ENCODE measurements at regions of chr19 and their contacts with region 1.

Region 1: DNA sequence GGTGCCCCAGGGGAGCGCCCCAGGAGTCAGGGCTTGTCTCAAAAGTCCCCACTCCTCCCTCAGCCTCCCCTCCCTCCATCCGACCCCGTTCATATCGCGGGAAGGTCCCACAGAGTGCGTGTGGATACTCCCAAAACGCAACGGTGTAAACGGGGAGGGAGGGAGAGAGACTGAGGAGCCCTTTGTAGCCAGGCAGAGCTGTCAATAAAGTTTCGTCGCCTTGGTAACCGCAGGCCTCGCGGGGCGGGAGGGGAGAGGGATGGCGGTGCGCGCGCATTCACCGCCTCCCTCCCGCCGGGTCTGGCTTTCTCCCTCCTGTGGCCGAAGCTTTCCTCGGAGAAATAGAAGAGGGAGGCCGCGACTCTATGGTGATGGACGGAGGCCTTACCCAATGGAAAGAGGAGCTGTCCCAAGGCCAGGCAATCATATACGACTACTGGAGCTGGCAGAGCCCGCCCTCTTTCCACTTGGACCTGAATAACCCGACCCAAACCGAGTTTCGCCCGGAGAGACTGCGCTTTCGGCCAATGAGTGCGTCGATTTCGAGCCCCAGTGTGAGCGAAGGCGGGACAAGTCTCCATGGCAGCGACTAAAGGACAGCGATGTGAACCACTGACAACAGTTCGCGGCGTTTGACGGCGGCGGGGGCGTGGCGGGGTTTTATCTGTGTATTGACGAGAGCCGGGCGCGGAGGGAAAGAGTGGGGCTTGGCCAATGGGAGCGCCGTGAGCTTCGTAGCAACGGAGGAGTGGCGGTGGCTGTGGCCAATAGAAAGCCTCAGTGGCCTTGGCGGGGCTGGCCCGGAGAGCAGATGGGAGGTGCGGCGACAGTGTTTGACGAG is at the start of gene KMT5C:
- DNase-seq: peak; percentile 100
- H3K4me3 ChIP-seq: peak within 1 kb of the TSS; percentile 82 to 84
- H3K27ac ChIP-seq: peak within 1 kb of the TSS; percentile 72 to 89
- H3K4me1 ChIP-seq: peaks cover 5 to 17% of the 10 kb centered on the region in 2 donors
- H3K27me3 ChIP-seq: no peaks in the 10 kb centered on the region
- CTCF ChIP-seq: peak; percentile 33 to 50 (median 47)
- total RNA-seq, gene KMT5C: 21.7 TPM

Region 2: DNA sequence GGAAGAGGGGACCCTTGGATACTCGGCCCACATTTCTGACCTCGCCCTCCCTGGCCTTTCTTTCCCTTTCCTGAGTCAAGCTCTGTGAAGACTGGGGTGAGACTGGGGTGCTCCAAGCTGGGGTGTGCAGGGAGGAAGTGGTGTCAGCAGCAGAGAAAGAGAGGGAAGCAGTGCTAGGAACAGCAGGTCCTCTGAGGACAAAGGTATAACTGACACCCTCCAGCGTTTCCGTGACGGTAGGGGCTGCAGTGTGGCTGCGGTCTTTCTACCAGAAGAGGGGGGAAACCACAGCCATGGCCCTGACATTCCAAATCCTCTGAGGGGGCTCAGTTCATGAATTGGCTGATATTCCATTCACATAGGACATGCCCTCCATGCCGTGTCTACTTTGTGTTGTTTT is 487.9 kb before region 1 on chr19:
- intact Hi-C with region 1: no loop called
- DNase-seq: no peak
- H3K4me3 ChIP-seq: no peak overlapping the region
- H3K27ac ChIP-seq: no peak overlapping the region
- H3K4me1 ChIP-seq: no peaks in the 10 kb centered on the region
- H3K27me3 ChIP-seq: no peaks in the 10 kb centered on the region
- CTCF ChIP-seq: no peak

Region 3: DNA sequence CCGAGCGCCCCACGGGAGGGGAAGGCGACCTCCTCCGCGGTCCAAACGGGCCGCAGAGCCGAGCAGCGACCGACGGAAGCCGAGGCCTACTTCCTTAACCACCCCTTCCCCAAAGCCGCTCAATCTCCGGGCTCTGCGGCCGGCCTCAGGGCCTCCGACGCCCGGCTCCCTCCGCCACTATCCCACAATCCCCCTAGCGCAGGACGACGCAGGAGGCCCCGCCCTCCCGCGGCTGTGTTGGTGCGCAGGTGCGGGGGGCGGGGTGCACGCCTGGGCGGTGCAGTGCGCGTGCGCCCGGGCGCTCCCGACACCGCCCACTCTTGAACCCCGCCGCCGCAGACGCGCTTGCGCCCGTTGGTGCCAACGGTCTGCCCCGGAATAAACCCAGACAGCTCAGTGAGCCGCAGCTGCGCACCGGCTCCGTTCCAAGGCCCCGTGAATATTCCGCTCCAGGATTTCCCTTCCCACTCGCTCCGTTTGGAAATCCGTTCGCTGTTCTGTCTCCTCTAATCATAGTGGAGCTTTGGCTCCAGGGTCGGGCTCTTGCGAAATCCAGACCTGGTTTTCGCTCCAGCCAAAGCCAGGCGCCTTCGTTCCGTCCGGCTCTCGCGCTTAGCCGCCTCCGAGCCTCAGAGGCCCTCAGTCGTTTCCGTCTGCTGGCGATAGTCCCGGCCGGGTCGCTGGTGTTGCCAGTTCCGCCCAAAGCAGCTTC is 80.3 kb before region 1 on chr19 and contains the start of gene PPP6R1:
- intact Hi-C with region 1: loop called (anchors 1 kb)
- DNase-seq: peak; percentile 92 to 99
- H3K4me3 ChIP-seq: peak within 1 kb of the TSS; percentile 85 to 87
- H3K27ac ChIP-seq: peak within 1 kb of the TSS; percentile 84 to 88
- H3K4me1 ChIP-seq: peaks cover 8 to 24% of the 10 kb centered on the region in 2 donors
- H3K27me3 ChIP-seq: no peaks in the 10 kb centered on the region
- CTCF ChIP-seq: peak in 1 of 3 experiments; percentile 15
- total RNA-seq, gene PPP6R1: 68.3 TPM

Region 4: DNA sequence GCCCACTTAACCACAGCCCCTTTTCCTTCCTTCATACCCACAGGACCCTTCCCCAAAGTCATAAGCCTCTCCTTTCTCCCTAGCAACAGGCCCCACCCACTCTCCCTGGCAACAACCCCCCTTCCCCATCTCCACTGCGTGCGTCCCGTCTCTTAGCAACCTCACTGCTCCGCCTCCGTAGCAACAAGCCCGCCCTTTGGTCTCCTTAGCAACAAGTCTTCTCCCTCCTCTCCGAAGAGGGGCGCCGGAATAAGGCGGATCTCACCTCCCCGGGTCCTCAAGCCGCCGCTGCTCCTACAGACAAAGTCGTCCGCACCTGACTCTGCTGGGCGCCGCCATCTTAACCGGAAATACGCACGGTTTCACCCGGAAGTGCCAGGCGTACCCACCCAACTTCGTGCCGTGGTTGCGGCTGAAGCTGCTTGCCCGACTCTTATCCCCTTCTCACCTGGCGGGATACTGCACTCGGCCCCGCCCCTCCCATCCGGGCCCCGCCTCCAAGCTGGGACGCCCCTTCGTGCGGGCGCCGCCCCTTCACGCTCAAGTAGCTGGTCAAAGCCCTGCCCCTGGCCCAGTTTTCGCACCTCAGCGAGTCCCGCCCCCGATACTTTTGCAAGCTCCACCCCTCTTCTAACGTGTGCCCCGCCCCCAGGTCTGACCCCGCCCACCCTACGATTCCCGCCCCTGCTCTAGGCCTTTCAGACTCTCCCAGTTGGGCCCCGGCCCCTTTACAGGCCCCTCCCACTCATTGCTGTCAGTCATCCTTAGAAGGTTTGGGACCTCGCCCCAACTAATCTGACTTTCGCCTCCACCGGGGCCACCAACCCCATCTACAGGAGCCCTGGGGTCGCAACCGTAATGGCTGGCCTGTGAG is 59.3 kb before region 1 on chr19 and contains the start of gene HSPBP1:
- intact Hi-C with region 1: loop called (anchors 1 kb)
- DNase-seq: peak; percentile 85 to 97
- H3K4me3 ChIP-seq: peak within 1 kb of the TSS; percentile 71 to 84
- H3K27ac ChIP-seq: peak within 1 kb of the TSS; percentile 66 to 68
- H3K4me1 ChIP-seq: peaks cover 11 to 16% of the 10 kb centered on the region in 2 donors
- H3K27me3 ChIP-seq: no peaks in the 10 kb centered on the region
- CTCF ChIP-seq: no peak
- total RNA-seq, gene HSPBP1: 72.7 TPM

Region 5: DNA sequence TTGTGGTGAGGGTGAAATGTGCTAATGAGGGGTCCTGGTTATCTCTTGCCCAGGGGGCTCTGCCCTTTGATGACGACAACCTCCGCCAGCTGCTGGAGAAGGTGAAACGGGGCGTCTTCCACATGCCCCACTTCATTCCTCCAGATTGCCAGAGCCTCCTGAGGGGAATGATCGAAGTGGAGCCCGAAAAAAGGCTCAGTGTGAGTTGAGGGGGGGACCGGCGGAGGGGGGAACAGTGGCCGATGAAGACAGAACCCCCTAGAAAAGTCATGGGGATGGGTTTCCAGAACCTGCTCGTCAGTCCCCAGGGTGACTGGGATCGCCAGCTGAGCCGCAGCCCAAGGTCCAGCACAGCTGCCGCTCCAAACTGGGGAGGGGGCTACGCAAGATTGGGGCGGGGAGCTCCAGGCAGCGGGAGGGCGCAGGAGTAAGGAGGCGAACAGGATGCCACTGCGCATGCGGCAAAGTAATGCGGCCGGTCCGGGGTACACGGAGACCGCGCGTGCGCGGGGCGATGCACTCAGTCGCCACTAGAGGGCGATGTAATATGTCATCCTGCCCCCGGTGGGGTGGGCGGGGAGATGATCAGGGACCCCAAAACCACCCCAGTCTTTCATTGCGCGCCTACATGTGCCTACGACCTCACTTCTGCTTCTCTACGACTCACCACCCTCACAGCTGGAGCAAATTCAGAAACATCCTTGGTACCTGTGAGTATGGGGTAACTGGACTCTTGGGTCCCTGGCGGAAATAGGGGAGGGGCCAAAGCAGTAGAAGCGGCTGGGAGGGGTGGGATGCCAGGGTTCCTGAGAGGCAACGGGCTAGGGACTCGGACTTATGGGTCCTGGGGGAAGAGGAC is 37.6 kb before region 1 on chr19:
- intact Hi-C with region 1: loop called (anchors 2 kb)
- DNase-seq: peak; percentile 36 to 88
- H3K4me3 ChIP-seq: peak overlapping the region; percentile 39 to 52
- H3K27ac ChIP-seq: no peak overlapping the region
- H3K4me1 ChIP-seq: peaks cover 0 to 7% of the 10 kb centered on the region in 2 donors
- H3K27me3 ChIP-seq: no peaks in the 10 kb centered on the region
- CTCF ChIP-seq: peak; percentile 87 to 97 (median 94)

Region 6: DNA sequence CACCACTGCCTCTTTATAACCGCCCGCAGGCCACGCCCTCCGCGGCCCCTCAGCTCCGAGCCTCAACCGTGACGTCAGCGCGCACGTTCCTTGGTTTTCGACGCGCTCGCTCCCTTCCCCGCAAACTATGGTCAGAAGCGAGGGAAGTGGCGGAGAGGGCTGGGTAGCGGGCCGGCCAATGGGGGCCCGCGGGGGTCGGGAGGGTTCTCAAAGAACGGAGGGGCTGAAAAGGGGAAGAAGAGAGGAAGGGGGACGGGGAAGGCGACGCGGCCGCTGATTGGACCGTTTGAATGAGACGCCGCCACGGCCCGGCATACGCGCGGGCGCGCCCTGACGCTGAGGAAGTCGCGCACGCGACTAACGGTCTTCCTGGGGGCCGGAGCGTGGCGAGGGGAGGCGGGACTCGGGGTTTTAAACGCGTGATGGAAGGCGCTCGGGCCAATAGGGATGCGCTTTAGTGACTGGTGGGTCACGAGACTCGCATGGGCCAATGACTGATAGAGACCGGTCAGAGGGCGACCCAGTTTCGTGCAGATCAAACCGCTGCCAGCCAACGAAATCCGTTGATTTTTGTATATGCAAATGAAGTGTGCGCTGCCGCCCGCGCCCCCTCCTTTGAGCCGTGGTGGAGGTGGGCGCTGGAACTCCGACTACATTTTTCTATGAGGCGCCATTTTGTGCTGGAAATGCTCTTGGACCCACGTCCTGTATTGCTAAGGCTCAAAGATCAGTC is 68.7 kb after region 1 on chr19:
- intact Hi-C with region 1: loop called (anchors 1 kb)
- DNase-seq: peak; percentile 95 to 99
- H3K4me3 ChIP-seq: peak overlapping the region; percentile 86 to 92
- H3K27ac ChIP-seq: peak overlapping the region; percentile 96 to 99
- H3K4me1 ChIP-seq: peaks cover 11 to 13% of the 10 kb centered on the region in 2 donors
- H3K27me3 ChIP-seq: no peaks in the 10 kb centered on the region
- CTCF ChIP-seq: no peak

Region 7: GRCh38 chr19:55476100-55476775 is 137.0 kb after region 1 on chr19 and contains the start of gene ZNF628:
- intact Hi-C with region 1: loop called (anchors 5 kb)
- DNase-seq: peak; percentile 93 to 99
- H3K4me3 ChIP-seq: peak within 1 kb of the TSS; percentile 82 to 84
- H3K27ac ChIP-seq: peak within 1 kb of the TSS; percentile 95 to 99
- H3K4me1 ChIP-seq: peaks cover 8 to 11% of the 10 kb centered on the region in 2 donors
- H3K27me3 ChIP-seq: no peaks in the 10 kb centered on the region
- CTCF ChIP-seq: no peak
- total RNA-seq, gene ZNF628: 13.2 TPM

Measured in ascending aorta (tissue), 2 donors.